ENCODE measurements at regions of chr2 and their contacts with region 1.

Region 1: GRCh38 chr2:168961450-168962229 is 60.5 kb downstream of the G6PC2 start:
- DNase-seq: peak; percentile 21
- H3K4me3 ChIP-seq: no peak overlapping the region
- H3K27ac ChIP-seq: no peak overlapping the region
- H3K4me1 ChIP-seq: no peaks in the 10 kb centered on the region
- H3K27me3 ChIP-seq: no peaks in the 10 kb centered on the region
- CTCF ChIP-seq: peak; percentile 87
- EP300 ChIP-seq: no peak
- RAD21 ChIP-seq: peak; percentile 84

Region 2: GRCh38 chr2:168948621-168949212 is 12.9 kb before region 1 on chr2:
- CTCF ChIA-PET with region 1: interaction called, 21 read pairs
- POLR2A ChIA-PET with region 1: no interaction called
- DNase-seq: no peak
- H3K4me3 ChIP-seq: no peak overlapping the region; a peak in 1 of 4 replicates
- H3K27ac ChIP-seq: no peak overlapping the region
- H3K4me1 ChIP-seq: no peaks in the 10 kb centered on the region
- H3K27me3 ChIP-seq: no peaks in the 10 kb centered on the region
- CTCF ChIP-seq: peak; percentile 72
- EP300 ChIP-seq: no peak
- RAD21 ChIP-seq: peak; percentile 21; the same call in 1 of the 2 replicates

Region 3: DNA sequence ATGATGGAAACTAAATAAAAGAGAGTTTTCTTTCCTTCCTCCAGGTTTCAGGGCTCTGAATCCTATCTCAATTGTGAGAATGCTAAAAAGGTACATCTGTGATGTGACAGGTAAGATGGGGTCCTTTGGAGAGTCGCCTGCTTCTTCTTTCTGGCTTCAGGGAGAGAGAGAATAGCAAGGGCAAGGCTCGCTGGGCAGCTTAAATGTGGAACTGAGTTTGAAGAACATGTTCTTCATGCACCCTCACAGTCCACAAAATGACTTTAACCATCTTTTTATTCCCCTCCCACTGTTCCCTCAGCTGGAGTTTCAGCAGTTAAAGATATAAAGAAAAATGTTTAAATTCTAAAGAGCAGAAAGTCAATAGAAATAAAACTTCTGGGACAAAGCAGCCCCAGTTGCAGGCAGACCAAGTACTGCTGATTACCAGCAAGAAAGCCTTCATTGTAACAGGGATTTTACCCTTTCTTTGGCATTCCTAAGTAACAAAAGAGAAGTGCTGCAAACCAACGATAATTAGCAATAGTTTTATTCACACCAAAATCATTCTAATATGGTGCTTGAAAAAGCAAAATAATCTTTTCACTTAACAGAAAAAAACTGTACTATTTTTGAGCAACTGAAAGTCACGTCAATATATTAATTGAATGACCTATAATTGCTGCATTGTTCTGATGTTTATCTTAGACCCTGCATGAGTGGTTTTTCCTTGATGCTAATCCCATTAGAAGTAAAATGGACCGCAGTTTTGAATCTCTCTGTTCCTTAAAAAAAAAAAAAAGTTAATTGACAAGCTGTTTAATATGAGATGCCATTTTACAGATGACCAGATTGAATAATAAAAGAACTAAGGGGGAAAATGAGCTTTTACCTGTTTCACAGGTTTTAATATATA is 339.2 kb after region 1 on chr2:
- CTCF ChIA-PET with region 1: no interaction called
- POLR2A ChIA-PET with region 1: no interaction called
- DNase-seq: no peak
- H3K4me3 ChIP-seq: no peak overlapping the region
- H3K27ac ChIP-seq: no peak overlapping the region
- H3K4me1 ChIP-seq: no peaks in the 10 kb centered on the region
- H3K27me3 ChIP-seq: no peaks in the 10 kb centered on the region
- CTCF ChIP-seq: no peak
- EP300 ChIP-seq: no peak
- RAD21 ChIP-seq: no peak

Measured in SK-N-SH (cell line).